ENCODE measurements at regions of chr17 and their contacts with region 1.

Region 1: DNA sequence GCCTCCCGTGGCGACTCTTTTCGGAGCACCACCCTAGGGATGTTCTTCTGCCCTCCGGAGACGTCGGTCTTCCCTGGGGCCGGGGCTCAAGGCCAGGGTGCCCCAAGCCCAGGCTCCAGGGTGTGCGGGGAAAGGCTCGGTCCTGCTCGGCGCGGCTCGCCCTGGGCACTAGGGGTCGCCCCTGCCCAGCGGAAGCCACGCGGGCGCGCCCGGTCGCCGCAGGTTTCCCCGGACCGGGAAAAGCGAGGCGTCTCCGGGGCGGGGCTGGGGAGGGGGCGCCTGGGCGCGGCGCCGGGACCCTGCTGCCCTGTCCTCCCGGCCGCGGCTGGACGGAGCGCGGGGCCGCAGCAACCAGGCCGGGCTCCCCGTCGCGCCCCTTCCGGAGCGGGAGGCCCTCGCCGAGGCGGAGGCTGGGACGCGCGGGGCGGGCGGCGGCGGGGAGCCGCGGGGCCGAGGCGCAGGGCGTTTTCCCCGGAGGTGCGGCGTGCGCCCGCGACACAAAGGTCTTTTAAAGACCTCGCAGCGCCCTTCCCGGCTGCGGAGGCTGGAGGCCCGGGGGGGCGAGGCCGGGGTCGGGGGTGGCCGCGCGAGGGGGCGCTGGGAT is 76.4 kb downstream of the MRC2 start:
- DNase-seq: peak; percentile 53
- ATAC-seq: peak; percentile 93
- H3K4me3 ChIP-seq: peak overlapping the region; percentile 81
- H3K27ac ChIP-seq: peak overlapping the region; percentile 70
- H3K4me1 ChIP-seq: peaks cover 24% of the 10 kb centered on the region
- H3K27me3 ChIP-seq: no peaks in the 10 kb centered on the region
- CTCF ChIP-seq: peak; percentile 93
- POLR2A ChIP-seq: no peak; the same call in 1 of the 2 replicates
- RAD21 ChIP-seq: peak; percentile 96

Region 2: DNA sequence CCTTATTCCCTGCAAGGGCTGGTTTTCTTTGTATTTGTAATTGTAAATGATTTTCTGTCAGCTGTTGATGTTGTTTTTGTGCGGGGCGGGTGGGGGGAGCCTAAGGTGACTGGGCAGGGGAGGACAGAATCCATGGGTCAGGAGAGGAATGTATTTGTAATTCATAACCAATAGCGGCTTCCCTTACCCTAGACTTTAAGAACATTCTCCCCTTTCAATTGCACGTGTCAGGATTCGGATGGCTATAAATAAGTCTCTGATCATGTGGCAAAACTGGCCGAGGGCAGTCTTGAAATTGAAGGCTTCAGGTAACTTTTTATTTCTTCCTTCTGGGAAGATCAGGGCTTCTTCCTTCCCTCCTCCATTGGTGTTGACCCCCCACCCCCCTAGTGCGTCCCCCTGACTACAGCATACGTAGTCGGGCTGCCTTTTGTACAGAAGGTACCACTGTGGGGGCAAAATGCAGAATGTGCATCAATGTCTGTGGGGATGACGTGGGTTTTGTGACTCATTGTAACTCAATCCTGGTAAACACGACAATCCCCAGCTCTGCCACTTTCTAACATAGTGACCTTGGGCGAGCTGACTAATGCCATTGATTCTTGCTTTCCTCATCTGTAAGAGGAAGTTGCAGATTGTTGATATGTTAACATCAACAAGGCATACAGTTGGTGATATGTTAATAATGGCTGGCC is 88.0 kb after region 1 on chr17:
- CTCF ChIA-PET with region 1: interaction called, 4 read pairs
- POLR2A ChIA-PET with region 1: no interaction called
- dilution Hi-C with region 1: no loop called
- in situ Hi-C with region 1: no loop called
- intact Hi-C with region 1: loop called (anchors 2 kb)
- DNase-seq: peak; percentile 100
- ATAC-seq: peak; percentile 52
- H3K4me3 ChIP-seq: no peak overlapping the region
- H3K27ac ChIP-seq: peak overlapping the region; percentile 92
- H3K4me1 ChIP-seq: peaks cover 14% of the 10 kb centered on the region
- H3K27me3 ChIP-seq: no peaks in the 10 kb centered on the region
- CTCF ChIP-seq: no peak
- POLR2A ChIP-seq: no peak; the same call in 1 of the 2 replicates
- RAD21 ChIP-seq: peak; percentile 26

Region 3: GRCh38 chr17:62819475-62820212 is 115.8 kb after region 1 on chr17:
- CTCF ChIA-PET with region 1: no interaction called
- POLR2A ChIA-PET with region 1: no interaction called
- dilution Hi-C with region 1: no loop called
- in situ Hi-C with region 1: no loop called
- intact Hi-C with region 1: loop called (anchors 2 kb)
- DNase-seq: peak; percentile 99
- ATAC-seq: peak; percentile 94
- H3K4me3 ChIP-seq: peak overlapping the region; percentile 24; the same call in 1 of the 2 replicates
- H3K27ac ChIP-seq: peak overlapping the region; percentile 70
- H3K4me1 ChIP-seq: peaks cover 25% of the 10 kb centered on the region
- H3K27me3 ChIP-seq: no peaks in the 10 kb centered on the region
- CTCF ChIP-seq: no peak
- POLR2A ChIP-seq: peak; percentile 82
- RAD21 ChIP-seq: peak; percentile 47

Region 4: DNA sequence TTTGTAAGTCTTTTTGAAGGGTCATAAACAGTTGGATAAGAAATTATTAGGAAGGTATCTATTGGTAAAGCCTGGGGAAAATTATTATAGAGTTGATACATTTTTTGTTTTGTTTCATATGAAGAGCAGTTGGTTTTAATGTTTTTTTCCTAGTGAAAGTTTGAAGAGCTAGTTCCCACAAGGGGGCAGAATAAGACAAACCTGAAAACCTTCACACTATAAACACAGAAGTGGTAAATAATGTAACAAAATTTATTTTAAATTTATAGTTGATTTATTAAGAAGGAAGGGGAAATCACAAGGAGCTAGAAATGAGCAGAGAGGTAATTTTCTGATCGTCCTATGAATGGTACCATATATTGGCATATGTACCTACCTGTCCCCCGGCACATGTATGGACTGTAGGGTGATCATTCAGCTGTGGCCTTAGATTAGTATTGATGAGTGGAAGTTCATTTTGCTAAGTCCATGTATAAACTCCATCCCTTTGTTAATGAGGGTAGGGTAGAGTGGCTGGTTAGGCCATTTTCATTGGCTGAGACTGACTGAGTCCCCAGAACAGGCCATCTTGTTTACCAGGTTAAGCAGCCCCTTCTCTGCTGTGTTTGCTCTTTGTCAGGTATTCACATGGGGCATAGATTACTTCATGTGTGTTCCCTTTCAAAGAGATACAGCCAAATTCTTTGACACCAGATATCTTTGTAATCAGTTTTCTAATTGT is 378.6 kb after region 1 on chr17:
- CTCF ChIA-PET with region 1: no interaction called
- POLR2A ChIA-PET with region 1: no interaction called
- dilution Hi-C with region 1: no loop called
- in situ Hi-C with region 1: no loop called
- intact Hi-C with region 1: loop called (anchors 1 kb)
- DNase-seq: peak; percentile 58
- ATAC-seq: peak; percentile 30
- H3K4me3 ChIP-seq: no peak overlapping the region
- H3K27ac ChIP-seq: no peak overlapping the region
- H3K4me1 ChIP-seq: peaks cover 8% of the 10 kb centered on the region; the same call in 1 of the 2 replicates
- H3K27me3 ChIP-seq: no peaks in the 10 kb centered on the region
- CTCF ChIP-seq: peak; percentile 62
- POLR2A ChIP-seq: no peak
- RAD21 ChIP-seq: peak; percentile 65

Region 5: DNA sequence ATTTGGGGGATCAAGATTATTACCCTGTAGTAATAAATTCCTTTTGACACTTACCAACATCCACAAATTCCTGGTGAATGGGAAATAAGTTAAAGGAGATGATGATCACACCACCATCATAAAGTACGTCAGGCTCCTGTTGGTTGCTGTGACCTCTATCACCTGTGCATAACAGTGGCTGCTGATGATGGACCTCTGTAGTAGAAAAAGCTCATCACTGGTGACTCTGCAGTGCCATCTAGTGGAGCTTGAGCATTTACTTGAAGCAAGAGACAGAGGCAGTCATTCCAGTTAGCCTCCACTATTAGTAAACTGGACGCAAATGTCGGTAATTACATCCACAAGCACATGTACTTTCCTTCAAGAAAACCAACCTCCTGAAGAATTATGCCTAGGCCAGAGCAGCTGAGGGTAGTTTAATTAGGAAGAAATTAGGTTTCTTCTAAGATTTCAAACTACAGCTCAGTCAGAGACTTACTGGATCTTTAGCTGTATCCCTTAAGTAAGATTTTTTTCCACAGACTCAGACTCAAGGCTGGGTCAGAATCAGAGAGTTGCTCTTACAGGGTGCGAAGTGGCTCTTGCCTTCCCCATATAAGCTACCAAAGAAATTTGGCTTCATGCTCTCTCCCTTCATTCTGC is 702.9 kb after region 1 on chr17:
- CTCF ChIA-PET with region 1: no interaction called
- POLR2A ChIA-PET with region 1: no interaction called
- dilution Hi-C with region 1: no loop called
- in situ Hi-C with region 1: no loop called
- intact Hi-C with region 1: loop called (anchors 1 kb)
- DNase-seq: peak; percentile 97
- ATAC-seq: peak; percentile 84
- H3K4me3 ChIP-seq: no peak overlapping the region
- H3K27ac ChIP-seq: no peak overlapping the region
- H3K4me1 ChIP-seq: peaks cover 10% of the 10 kb centered on the region
- H3K27me3 ChIP-seq: no peaks in the 10 kb centered on the region
- CTCF ChIP-seq: peak; percentile 88
- POLR2A ChIP-seq: no peak
- RAD21 ChIP-seq: peak; percentile 90